ENCODE measurements at regions of chr6 and their contacts with region 1.

Region 1: GRCh38 chr6:33620856-33621710 is at the start of gene ITPR3:
- DNase-seq: peak; percentile 84
- ATAC-seq: peak; percentile 83
- H3K4me3 Mint-ChIP-seq: peak within 1 kb of the TSS; percentile 97
- H3K27ac Mint-ChIP-seq: peak within 1 kb of the TSS; percentile 92
- H3K4me1 Mint-ChIP-seq: peaks cover 50% of the 10 kb centered on the region
- H3K27me3 Mint-ChIP-seq: peaks cover 3% of the 10 kb centered on the region
- total RNA-seq, gene ITPR3: 61.4 to 61.8 TPM

Region 2: GRCh38 chr6:33540768-33541167 is 80.3 kb before region 1 on chr6:
- POLR2A ChIA-PET with region 1: no interaction called
- DNase-seq: no peak
- ATAC-seq: no peak
- H3K4me3 Mint-ChIP-seq: no peak overlapping the region
- H3K27ac Mint-ChIP-seq: no peak overlapping the region
- H3K4me1 Mint-ChIP-seq: peaks cover 8% of the 10 kb centered on the region
- H3K27me3 Mint-ChIP-seq: peaks cover under 1% of the 10 kb centered on the region

Region 3: DNA sequence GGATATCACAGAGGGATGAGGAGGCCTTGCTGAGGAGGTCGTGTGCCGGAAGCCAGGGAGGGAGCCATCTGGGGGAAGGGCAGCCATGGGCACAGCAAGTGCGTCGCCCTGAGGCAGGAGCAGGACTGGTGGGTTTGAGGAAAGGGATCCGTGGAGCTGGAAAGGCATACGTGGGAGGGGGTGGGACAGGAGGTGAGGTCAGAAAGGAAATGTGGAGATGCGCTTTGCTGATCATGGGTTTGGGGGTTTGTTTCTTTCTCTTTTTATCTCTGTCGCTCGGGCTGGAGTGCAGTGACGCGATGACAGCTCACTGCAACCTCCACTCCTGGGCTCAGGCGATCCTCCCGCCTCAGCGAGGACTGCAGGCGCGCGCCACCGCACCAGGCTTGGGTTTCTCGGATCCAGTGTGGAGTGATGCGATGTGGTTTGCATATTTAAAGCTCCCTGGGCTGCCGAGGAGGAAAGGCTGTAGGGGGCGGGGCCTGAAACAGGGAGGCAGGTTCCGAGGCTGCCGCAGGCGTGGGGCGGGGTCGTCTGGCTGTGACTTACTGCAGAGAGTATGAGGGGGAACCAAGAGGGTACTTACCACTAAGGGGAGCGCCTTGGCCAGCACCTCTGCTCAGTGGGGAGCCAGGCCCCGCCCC is 28.6 kb before region 1 on chr6:
- POLR2A ChIA-PET with region 1: interaction called, 11 read pairs
- DNase-seq: peak; percentile 52
- ATAC-seq: no peak
- H3K4me3 Mint-ChIP-seq: peak overlapping the region; percentile 72
- H3K27ac Mint-ChIP-seq: peak overlapping the region; percentile 72
- H3K4me1 Mint-ChIP-seq: peaks cover 28% of the 10 kb centered on the region
- H3K27me3 Mint-ChIP-seq: peaks cover 2% of the 10 kb centered on the region

Region 4: GRCh38 chr6:33607784-33608161 is 13.3 kb before region 1 on chr6:
- POLR2A ChIA-PET with region 1: interaction called, 10 read pairs
- DNase-seq: peak; percentile 45
- ATAC-seq: no peak
- H3K4me3 Mint-ChIP-seq: no peak overlapping the region
- H3K27ac Mint-ChIP-seq: no peak overlapping the region
- H3K4me1 Mint-ChIP-seq: no peaks in the 10 kb centered on the region
- H3K27me3 Mint-ChIP-seq: peaks cover 8% of the 10 kb centered on the region

Region 5: GRCh38 chr6:33633462-33634158 is 12.5 kb after region 1 on chr6:
- POLR2A ChIA-PET with region 1: interaction called, 25 read pairs
- DNase-seq: peak; percentile 77
- ATAC-seq: peak; percentile 77
- H3K4me3 Mint-ChIP-seq: peak overlapping the region; percentile 87
- H3K27ac Mint-ChIP-seq: peak overlapping the region; percentile 67
- H3K4me1 Mint-ChIP-seq: peaks cover 42% of the 10 kb centered on the region
- H3K27me3 Mint-ChIP-seq: no peaks in the 10 kb centered on the region

Measured in activated naive CD8-positive, alpha-beta T cell treated with anti-CD3 and anti-CD28 coated beads, Interleukin-2, amount 10 ng/mL, durations not matched to agents 7 days and 5 days (primary cell).